Panc1 (cell line): ENCODE measurements at regions of chr10 and their contacts with region 1.

Region 1: DNA sequence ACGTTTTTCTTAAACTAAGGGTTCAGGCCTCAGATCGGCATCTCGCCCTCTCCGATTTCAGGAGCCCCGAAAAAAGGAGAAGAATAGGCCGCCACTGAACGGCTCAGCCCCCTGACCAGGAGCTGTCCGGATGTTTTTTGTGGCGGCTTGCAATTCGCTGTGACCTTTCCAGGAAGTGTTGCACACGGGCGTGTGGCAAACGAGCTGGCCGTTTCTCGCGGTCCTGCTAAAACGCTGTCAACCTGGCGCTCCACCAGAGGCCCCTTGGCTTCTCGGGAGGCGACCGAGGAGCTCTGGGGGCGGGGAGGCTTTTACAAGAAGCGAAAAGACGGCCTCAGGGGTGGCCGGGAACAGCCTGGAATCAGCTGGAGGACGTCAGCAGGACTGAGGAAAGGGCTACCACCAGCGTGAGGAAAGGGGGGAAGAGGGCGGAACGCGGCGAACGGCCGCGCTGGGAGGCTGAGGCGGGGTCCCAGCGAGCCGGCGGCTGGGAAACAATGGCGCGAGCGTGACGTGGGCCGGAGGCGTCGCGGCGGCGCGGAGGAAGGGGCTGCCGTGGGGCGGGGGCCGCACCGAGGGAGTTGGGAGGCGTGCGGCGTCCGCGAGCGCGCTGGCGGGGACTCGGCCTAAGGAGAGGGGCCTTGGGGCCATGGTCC is 493 bp downstream of the NT5C2 start:
- DNase-seq: no peak
- ATAC-seq: peak; percentile 71
- H3K4me3 ChIP-seq: peak overlapping the region; percentile 81 to 93
- H3K27ac ChIP-seq: peak overlapping the region; percentile 93
- H3K4me1 ChIP-seq: peaks cover 47% of the 10 kb centered on the region
- H3K27me3 ChIP-seq: no peaks in the 10 kb centered on the region
- CTCF ChIP-seq: no peak

Region 2: DNA sequence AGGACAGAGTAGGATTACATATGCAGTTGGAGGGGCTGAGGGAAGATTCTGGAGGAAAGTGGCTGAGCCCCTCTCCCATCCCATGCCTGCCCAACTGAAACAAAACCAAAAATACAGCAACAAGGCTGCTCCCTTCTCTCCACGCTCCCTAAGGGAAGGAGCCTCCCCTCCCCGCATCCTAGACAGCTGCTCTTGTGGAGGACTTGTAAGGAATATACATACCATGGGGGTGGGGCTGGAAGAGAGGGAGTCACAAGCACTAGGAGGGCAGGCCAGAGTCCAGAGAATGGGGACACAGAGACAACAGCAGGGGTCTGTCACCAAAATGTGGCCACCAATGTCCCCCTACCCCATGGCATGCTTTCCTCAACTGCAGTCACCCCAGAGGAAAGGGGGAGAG is 1085.6 kb before region 1 on chr10:
- CTCF ChIA-PET with region 1: no interaction called
- POLR2A ChIA-PET with region 1: interaction called, 10 read pairs
- in situ Hi-C with region 1: no loop called
- intact Hi-C with region 1: no loop called
- DNase-seq: no peak
- ATAC-seq: no peak; the same call in 1 of the 2 replicates
- H3K4me3 ChIP-seq: no peak overlapping the region
- H3K27ac ChIP-seq: no peak overlapping the region
- H3K4me1 ChIP-seq: no peaks in the 10 kb centered on the region
- H3K27me3 ChIP-seq: no peaks in the 10 kb centered on the region
- CTCF ChIP-seq: no peak

Region 3: DNA sequence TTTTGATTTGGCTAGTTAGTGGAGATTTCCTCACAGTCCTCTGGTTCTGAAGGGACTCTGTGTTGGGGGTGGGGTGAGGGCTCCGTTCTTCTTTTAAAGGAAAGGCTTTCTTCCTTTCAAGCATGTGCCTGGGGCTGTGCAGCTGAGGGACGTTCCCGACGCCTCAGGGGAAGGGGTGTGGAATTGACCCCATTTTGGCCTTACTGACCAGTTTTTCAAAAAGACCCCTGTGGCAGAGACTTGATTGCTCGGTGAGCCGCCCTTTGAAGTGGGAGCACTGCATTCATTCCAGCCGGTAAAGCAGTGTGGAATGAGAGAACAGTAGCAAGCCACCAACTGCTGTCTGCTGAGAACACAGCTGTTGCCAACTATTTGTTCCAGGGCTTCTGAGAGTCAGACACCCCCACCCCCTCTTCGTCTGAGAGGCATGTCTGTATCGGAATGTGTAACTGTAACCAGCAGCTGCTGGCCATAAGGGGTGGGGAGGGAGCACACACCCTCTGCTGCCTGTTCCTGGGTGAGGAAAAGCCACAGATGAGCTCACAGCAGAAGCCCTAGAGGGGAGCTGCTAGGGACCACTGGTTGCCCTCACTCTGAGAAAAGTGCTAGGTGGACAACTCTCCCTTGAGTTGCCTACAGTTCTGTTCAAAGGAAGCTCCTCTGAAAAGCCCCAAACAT is 415.7 kb before region 1 on chr10:
- CTCF ChIA-PET with region 1: no interaction called
- POLR2A ChIA-PET with region 1: interaction called, 17 read pairs
- in situ Hi-C with region 1: no loop called
- intact Hi-C with region 1: no loop called
- DNase-seq: no peak
- ATAC-seq: peak; percentile 59
- H3K4me3 ChIP-seq: peak overlapping the region; percentile 21 to 53
- H3K27ac ChIP-seq: peak overlapping the region; percentile 94
- H3K4me1 ChIP-seq: peaks cover 94% of the 10 kb centered on the region
- H3K27me3 ChIP-seq: no peaks in the 10 kb centered on the region
- CTCF ChIP-seq: no peak

Region 4: GRCh38 chr10:103125323-103126267 is 67.0 kb before region 1 on chr10:
- CTCF ChIA-PET with region 1: no interaction called
- POLR2A ChIA-PET with region 1: no interaction called
- in situ Hi-C with region 1: no loop called
- intact Hi-C with region 1: no loop called
- DNase-seq: no peak
- ATAC-seq: no peak
- H3K4me3 ChIP-seq: no peak overlapping the region
- H3K27ac ChIP-seq: no peak overlapping the region; the same call in 1 of the 2 replicates
- H3K4me1 ChIP-seq: peaks cover 42% of the 10 kb centered on the region
- H3K27me3 ChIP-seq: no peaks in the 10 kb centered on the region
- CTCF ChIP-seq: no peak

Region 5: DNA sequence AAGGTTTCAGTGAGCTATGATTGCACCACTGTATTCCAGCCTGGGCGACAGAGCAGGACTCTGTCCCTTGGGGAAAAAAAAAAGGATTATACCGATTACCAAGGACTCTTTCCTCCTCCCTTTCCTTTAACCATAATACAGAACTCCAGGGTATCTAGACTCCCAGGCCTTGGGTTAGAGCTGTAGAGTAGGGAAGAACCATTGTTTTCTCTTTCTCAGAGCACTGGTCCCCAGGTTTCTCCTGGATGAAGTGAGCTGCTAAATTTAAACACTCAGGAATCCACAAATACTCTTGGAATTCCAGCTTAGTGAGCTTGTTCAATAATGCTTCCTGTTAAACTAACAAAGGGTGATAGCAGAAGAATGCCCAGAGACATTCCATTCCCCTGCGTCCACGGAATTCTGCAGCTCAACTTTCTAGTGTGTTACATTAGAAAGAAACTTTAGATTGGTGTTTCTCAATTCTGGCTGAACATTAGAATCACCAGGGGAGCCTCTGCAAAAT is 38.5 kb after region 1 on chr10:
- CTCF ChIA-PET with region 1: interaction called, 5 read pairs
- POLR2A ChIA-PET with region 1: interaction called, 26 read pairs
- in situ Hi-C with region 1: no loop called
- intact Hi-C with region 1: loop called (anchors 1 kb)
- DNase-seq: peak; percentile 97
- ATAC-seq: peak; percentile 86
- H3K4me3 ChIP-seq: 0 out of 4 replicates have a peak overlapping the region, but pooled peaks of 1 of the 2 experiments have one; percentile 13
- H3K27ac ChIP-seq: peak overlapping the region; percentile 86
- H3K4me1 ChIP-seq: peaks cover 56% of the 10 kb centered on the region
- H3K27me3 ChIP-seq: no peaks in the 10 kb centered on the region
- CTCF ChIP-seq: no peak

Region 6: GRCh38 chr10:103238506-103239252 is 46.1 kb after region 1 on chr10:
- CTCF ChIA-PET with region 1: interaction called, 15 read pairs
- POLR2A ChIA-PET with region 1: interaction called, 9 read pairs
- in situ Hi-C with region 1: no loop called
- intact Hi-C with region 1: loop called (anchors 5 kb)
- DNase-seq: no peak
- ATAC-seq: peak; percentile 76
- H3K4me3 ChIP-seq: no peak overlapping the region
- H3K27ac ChIP-seq: peak overlapping the region; percentile 77
- H3K4me1 ChIP-seq: peaks cover 36% of the 10 kb centered on the region
- H3K27me3 ChIP-seq: no peaks in the 10 kb centered on the region
- CTCF ChIP-seq: peak; percentile 43

Region 7: GRCh38 chr10:103244663-103245271 is 52.2 kb after region 1 on chr10:
- CTCF ChIA-PET with region 1: interaction called, 11 read pairs
- POLR2A ChIA-PET with region 1: interaction called, 8 read pairs
- in situ Hi-C with region 1: no loop called
- intact Hi-C with region 1: loop called (anchors 5 kb)
- DNase-seq: peak; percentile 75
- ATAC-seq: peak; percentile 78
- H3K4me3 ChIP-seq: no peak overlapping the region
- H3K27ac ChIP-seq: peak overlapping the region; percentile 71; the same call in 1 of the 2 replicates
- H3K4me1 ChIP-seq: peaks cover 25% of the 10 kb centered on the region
- H3K27me3 ChIP-seq: no peaks in the 10 kb centered on the region
- CTCF ChIP-seq: peak; percentile 97